ENCODE measurements at regions of chr7 and their contacts with region 1.

Region 1: DNA sequence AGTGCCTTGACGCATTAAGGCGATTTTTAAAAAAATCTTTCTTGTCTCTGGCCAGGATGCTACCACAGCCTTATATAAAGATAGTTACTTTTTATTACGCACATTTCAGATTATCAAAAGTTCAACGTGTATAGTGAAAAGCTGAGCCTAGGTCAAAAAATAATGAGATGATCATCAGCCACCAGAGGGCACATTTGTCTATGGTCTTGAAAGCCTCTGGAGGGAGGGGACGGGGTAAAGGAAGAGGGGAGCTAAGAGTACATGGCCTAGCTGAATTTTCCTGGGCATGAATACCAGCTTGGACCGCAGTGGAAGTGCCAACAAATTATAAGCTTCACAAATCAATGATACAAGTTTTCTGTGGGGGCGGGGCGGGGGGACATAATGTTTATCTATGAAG is 285.9 kb upstream of the SMIM30 start:
- DNase-seq: peak in 1 of 2 experiments; percentile 13
- H3K4me3 ChIP-seq: no peak overlapping the region
- H3K27ac ChIP-seq: no peak overlapping the region
- H3K4me1 ChIP-seq: no peaks in the 10 kb centered on the region
- H3K27me3 ChIP-seq: no peaks in the 10 kb centered on the region
- CTCF ChIP-seq: peak in 2 of 3 experiments; percentile 59 to 61; a peak in 3 of 4 replicates
- EP300 ChIP-seq: no peak
- POLR2A ChIP-seq: no peak
- RAD21 ChIP-seq: peak; percentile 64 to 73

Region 2: DNA sequence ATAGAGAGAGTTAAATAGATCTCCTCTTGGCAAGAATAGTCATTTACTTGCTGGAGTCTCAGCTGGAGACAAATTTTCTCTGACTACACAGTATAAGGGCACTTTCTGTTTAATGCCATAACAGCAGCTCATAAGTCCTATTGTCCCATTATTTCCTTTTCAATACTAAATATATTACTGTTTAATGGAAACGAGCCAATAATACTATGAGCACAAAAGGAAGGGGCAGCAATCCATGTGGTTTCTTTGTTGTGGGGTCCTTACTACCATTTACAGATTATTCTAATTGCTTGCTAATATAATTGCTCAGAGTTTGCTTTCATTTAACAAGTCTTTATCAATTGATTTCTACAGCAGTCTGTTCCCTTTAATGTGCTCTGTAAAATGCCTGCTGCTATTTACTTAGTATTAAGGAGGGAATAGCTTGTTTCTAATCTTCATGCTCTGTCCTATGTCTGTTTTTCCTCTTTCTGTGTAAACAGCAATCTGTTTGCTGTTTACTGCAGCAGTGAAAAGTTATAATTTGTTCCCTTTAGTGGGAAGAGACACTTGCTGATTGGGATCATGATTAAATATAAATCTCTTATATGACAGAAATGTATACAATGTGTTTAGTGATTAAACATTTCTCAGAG is 10.3 kb after region 1 on chr7:
- CTCF ChIA-PET with region 1: interaction called, 28 read pairs
- POLR2A ChIA-PET with region 1: no interaction called
- DNase-seq: no peak
- H3K4me3 ChIP-seq: no peak overlapping the region
- H3K27ac ChIP-seq: no peak overlapping the region
- H3K4me1 ChIP-seq: no peaks in the 10 kb centered on the region
- H3K27me3 ChIP-seq: no peaks in the 10 kb centered on the region
- CTCF ChIP-seq: no peak
- EP300 ChIP-seq: no peak
- POLR2A ChIP-seq: no peak
- RAD21 ChIP-seq: no peak